ENCODE measurements at regions of chr10 and their contacts with region 1.

Region 1: DNA sequence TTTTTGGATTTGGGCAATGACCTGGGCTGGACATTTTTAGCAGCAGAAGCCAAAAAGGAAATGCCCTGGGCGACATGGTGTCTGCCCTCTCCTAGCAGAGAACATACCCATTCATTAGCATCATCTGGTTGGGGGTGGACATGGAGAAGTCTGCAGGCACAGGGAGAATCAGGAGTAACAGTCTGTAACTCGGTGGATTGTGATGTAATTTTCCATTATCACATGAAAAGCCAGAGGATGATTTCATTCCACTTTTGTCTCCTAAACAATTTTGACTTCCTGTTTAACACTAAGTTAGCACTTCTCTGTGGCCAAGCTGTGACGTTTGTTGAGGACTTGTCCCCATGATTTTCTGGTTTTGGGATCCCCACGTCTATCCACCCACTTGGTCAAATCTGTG is 153.8 kb upstream of the HABP2 start:
- DNase-seq: no peak
- H3K4me3 ChIP-seq: no peak overlapping the region
- H3K27ac ChIP-seq: no peak overlapping the region
- H3K4me1 ChIP-seq: no peaks in the 10 kb centered on the region
- H3K27me3 ChIP-seq: no peaks in the 10 kb centered on the region
- CTCF ChIP-seq: no peak
- EP300 ChIP-seq: no peak
- POLR2A ChIP-seq: no peak

Region 2: DNA sequence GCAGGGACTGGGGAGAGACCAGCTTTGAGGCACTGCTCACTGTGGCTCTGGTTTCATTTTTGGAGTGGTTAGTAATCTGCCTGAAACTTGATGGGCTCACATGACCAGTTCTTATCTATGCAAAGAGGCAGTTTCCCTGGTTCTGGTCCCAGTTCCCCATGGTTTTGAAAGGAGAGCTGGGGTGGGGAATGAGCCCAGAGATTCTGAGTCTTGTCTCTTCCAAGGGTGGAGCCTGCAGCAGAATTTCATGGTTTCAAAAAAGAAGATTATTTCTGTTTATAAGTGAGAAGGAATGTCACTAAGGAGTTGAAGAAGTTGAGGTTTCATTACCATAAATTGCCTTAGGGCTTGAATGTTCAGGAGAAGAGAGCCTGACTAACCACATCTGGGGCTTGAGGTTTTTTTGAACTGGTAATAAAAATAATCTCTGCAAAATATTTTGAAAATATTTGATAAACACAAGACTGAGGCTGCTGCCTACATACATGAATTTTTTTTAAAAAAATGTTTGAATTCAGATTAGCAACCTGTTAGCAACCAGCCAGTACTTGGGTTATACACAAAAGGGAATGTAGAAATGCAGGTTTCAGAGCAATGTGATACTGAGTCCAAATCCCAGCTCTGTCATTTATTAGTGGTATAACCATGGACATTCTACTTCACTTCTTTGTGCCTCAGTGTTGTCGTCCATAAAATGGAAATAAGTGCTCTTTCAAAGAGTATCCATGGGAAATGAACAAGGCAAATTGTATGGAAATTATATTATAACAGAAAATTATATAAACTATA is 36.2 kb before region 1 on chr10:
- intact Hi-C with region 1: no loop called
- DNase-seq: peak in 3 of 5 donors; percentile 14 to 57 (median 19)
- H3K4me3 ChIP-seq: no peak overlapping the region
- H3K27ac ChIP-seq: no peak overlapping the region
- H3K4me1 ChIP-seq: no peaks in the 10 kb centered on the region
- H3K27me3 ChIP-seq: no peaks in the 10 kb centered on the region
- CTCF ChIP-seq: no peak
- EP300 ChIP-seq: no peak
- POLR2A ChIP-seq: no peak

Region 3: DNA sequence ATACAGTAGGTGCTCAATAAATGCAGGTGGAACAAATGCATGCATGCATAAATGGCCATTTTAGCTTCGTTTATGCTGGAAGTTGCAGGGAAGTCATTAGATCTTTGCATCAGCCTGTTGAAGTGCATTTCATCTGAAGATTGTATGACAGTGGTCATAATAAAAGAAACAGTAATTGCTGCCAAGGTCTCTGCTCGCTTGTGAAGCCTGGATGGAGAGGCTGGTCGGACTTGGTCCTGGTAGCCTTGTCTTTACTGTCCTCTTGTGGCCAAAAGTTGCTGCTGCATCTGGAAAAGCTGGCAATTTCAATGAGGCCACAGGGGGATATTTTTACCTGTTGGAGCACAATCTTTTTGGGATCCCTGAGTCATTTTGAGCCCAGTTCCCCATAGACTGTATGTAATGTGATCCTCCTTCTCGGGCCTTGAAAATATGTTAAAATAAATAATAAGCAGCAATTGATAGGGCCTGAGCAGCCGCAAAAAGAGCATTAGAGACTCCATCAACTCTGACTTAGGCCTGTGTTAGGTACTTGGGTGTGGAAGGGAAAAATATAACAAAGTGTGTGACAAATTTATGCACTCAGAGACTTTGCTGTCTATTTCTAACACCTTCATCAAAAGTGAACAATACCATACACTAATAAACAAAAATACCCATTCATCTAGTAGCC is 122.2 kb after region 1 on chr10:
- intact Hi-C with region 1: loop called in 1 of 4 experiments (anchors 10 kb)
- DNase-seq: peak; percentile 61 to 75 (median 69)
- H3K4me3 ChIP-seq: no peak overlapping the region
- H3K27ac ChIP-seq: no peak overlapping the region
- H3K4me1 ChIP-seq: peaks cover 3% of the 10 kb centered on the region
- H3K27me3 ChIP-seq: no peaks in the 10 kb centered on the region
- CTCF ChIP-seq: peak; percentile 86 to 96 (median 96)
- EP300 ChIP-seq: no peak
- POLR2A ChIP-seq: no peak